Transverse colon (tissue), 4 donors: ENCODE measurements at regions of chr22 and their contacts with region 1.

Region 1: DNA sequence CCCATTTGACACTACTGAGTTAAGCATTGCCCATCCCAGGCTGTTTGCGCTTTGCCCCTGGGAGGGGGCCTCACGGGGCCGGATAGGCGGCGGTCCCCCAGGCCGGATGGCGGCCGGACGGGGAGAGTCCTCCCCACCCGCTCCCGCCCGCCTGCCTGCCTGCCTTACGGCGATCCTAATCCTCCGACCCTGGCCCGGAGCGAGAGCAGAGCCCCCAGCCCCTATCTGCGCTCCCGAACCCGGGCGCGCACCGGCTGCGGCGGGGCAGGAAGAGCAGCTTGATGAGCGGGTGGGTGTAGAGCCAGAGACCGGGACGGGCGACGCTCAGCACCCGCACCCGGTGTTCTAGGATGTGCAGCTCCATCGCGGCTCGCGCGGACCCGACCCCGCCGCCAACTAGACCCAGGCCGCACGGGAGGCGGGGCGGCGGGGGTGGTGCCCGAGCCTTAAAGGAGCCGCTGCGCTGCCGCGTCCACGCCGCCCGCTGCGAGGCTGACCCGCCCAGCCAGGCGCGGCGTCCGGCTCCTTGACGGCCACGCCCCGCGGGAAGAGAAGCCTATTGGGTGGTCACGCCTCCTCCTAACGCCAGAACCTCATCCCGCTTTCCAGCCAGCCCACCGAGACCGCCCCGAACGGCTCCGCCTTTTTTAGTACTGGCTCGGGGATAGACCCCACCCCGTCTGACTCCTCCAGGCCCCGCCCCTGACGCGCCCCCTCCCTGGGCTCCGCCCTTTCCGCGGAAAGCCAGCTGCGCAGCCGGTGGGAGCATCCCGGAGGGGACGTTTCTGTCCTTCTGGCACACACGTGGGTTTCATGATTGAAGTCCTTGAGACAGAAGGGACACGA is at the start of gene CASTOR1:
- DNase-seq: peak; percentile 99
- H3K4me3 ChIP-seq: peak within 1 kb of the TSS; percentile 55 to 81 (median 78)
- H3K27ac ChIP-seq: peak within 1 kb of the TSS; percentile 89 to 93 (median 90)
- H3K4me1 ChIP-seq: peaks cover 27 to 41% (median 34%) of the 10 kb centered on the region in 4 donors
- H3K27me3 ChIP-seq: no peaks in the 10 kb centered on the region
- CTCF ChIP-seq: no peak
- EP300 ChIP-seq: no peak
- POLR2A ChIP-seq: peak; percentile 59
- total RNA-seq, gene CASTOR1: 5.6 to 6.8 TPM in 2 of 4 donors, not detected in the others

Region 2: DNA sequence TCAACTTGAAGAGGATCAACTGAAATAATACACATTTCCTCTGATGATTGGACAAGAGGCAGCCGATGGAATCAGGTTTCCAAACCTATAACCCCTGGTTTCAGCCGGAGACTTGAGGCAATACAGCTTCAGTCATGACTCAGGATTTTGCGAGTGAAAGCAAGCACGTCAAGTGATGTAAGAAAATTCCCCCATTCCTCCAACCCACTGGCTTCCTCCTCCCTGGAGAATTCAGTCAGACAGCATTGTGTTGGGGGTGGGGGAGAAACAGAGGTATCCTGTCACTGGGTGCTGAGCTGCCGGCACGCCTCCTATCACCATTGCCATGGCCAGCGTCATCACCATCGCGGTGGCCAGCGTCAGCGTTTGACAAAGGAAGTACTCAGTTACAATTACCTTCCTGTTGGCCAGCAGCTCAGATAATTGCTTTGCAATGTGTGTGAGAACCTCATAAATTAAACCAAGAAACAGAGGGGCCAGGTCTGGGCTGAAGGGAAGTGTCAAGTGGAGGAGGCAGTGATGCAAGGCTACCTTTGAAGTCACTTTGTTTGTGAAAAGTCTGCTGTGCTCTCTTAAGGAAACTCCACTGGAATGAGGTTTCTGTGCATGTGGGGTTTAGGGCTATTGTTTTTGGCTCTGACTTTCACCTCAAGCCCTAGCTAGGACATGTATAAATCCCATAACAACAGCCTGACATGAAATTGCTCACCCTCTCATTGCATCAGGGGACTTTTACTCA is 93.0 kb before region 1 on chr22:
- in situ Hi-C with region 1: no loop called
- intact Hi-C with region 1: no loop called
- DNase-seq: peak; percentile 68
- H3K4me3 ChIP-seq: no peak overlapping the region
- H3K27ac ChIP-seq: peak overlapping the region; percentile 46 to 69 (median 61)
- H3K4me1 ChIP-seq: peaks cover 0 to 23% (median 14%) of the 10 kb centered on the region in 4 donors
- H3K27me3 ChIP-seq: peaks cover 1% of the 10 kb centered on the region
- CTCF ChIP-seq: no peak
- EP300 ChIP-seq: no peak
- POLR2A ChIP-seq: peak; percentile 20

Region 3: GRCh38 chr22:30326706-30327362 is 37.5 kb after region 1 on chr22 and contains the start of gene TBC1D10A:
- in situ Hi-C with region 1: no loop called
- intact Hi-C with region 1: loop called (anchors 2 kb)
- DNase-seq: peak; percentile 96
- H3K4me3 ChIP-seq: peak within 1 kb of the TSS; percentile 47 to 98 (median 83)
- H3K27ac ChIP-seq: peak within 1 kb of the TSS; percentile 86 to 96 (median 90)
- H3K4me1 ChIP-seq: peaks cover 20 to 47% (median 36%) of the 10 kb centered on the region in 4 donors
- H3K27me3 ChIP-seq: no peaks in the 10 kb centered on the region
- CTCF ChIP-seq: no peak
- EP300 ChIP-seq: no peak
- POLR2A ChIP-seq: peak; percentile 90
- total RNA-seq, gene TBC1D10A: 27.9 to 72.2 (median 45.7) TPM

Region 4: DNA sequence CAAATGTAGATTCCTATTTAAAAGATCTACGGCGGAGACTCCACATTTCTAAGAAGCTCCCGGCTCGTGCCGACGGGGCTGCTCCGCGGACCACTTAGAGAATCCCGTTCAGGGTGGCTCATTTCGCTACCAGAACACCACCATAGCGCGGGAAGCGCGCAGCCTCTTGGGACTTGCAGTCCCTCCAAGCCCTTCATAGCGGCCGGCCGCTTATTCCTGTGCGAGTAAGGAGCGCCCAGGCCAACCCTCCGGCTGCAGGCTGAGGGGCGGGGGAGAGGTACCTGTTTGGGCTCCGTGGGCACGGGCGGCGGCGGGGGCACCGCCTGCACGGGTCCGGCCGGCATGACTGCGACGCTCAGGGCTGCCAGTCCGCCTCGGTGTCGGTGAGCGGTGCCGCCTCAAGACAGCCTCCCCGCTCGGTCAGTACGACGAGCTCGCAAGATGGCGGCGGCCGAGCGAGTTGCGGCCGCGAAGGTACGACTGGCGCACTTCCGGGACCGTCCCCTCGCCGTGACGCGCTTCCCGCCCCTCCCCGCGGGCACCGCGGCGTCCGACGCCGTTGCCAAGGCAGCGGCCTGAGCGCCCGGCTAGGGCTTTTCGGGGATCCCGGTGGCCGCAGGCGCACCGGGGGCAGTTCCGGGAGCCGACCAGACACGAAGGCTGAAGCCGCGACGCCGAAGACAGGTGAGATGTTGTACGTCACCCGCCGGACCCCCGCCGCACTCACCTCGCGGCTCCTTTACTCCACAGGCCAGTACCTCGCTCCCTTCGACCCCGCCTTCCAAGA is 67.3 kb after region 1 on chr22 and contains the starts of genes CCDC157 and SF3A1:
- in situ Hi-C with region 1: no loop called
- intact Hi-C with region 1: loop called (anchors 2 kb)
- DNase-seq: peak; percentile 90
- H3K4me3 ChIP-seq: peak within 1 kb of the TSS; percentile 55 to 84 (median 70)
- H3K27ac ChIP-seq: peak within 1 kb of the TSS; percentile 94 to 96 (median 95)
- H3K4me1 ChIP-seq: peaks cover 15 to 34% (median 25%) of the 10 kb centered on the region in 4 donors
- H3K27me3 ChIP-seq: no peaks in the 10 kb centered on the region
- CTCF ChIP-seq: peak in 1 of 5 experiments; percentile 27
- EP300 ChIP-seq: no peak
- POLR2A ChIP-seq: peak; percentile 88
- total RNA-seq, gene CCDC157: 1.4 to 5.2 (median 3.3) TPM
- total RNA-seq, gene SF3A1: 73.2 to 664 (median 99.3) TPM